ENCODE measurements at regions of chr15 and their contacts with region 1.

Region 1: DNA sequence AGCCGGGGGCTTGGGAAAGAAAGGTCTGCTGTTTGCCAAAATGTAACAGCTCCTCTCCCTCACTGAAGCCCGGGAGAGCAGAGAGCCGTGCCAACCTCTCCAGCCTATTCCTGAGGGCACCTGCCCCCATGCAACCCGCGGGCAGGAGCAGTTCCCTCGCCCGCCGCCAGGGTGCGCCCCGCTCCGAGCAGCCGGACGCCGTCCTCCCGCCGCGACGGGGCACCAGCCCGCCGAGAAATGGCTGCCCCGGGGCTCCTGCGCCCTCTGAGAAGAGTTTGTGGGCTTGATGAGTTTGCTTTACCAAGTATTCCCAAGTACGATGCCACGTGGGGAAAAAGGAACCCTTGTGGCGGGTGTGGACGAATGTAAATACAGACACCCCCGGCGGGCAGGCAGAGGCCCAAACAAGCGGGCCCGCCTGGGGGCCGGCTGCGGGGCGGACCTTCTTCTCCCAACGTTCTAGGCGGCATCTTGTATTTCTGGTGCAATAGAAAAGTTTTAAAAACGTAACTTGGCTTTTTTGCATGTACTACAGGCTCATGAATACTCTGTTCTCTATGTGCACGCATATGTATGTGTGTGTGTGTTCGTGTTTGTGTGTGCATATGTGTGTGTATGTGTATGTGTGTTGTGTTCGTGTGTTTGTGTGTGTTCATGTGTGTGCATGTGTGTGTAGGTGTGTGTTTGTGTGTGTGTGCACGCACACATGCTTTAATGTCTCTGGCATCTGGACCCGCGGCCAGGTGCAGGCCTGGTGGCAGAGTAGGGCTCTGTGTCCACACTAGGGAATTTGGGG is 162.9 kb downstream of the CHSY1 start:
- DNase-seq: peak; percentile 94

Region 2: GRCh38 chr15:101014921-101015841 is 73.8 kb before region 1 on chr15:
- intact Hi-C with region 1: loop called in 1 of 2 experiments (anchors 10 kb)
- DNase-seq: peak; percentile 91

Region 3: DNA sequence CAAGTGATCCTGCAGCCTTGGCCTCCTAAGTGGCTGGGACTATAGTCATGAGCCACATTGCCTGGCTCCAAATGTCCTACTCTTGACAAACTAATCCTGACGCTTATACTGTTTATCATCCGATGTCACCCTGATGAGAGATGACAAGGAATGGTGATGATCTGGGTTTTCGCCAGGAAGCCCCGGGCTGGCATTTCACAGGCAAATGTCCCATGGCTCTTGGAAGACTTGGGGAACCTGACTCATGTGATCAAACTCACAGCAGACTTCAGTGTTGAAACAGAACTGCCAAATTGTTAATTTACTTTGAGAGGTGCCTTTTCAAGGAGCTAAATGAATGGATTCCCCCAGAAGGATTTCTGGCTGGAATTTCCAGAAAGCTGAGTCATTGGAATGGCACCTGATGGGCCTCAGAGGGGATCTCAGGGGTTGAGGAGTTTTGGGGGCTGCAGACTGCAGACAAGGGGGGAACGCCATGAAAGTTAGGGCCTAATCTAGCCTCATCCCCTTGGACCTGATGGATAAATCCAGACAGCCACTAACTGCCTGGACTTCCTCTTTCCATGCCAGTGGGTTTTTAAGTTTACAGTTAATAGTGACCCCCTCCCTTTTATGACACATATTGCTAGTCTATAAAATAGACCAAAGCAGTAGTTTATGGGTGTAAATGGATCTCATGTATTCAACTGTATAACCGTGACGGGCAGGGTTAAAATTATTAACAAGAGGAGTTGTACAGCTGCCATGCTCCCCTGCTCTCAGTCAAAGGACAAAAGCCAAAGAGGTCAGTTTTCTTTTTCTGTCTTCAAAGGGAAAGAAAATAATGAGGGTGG is 16.3 kb after region 1 on chr15:
- intact Hi-C with region 1: no loop called
- DNase-seq: no peak

Region 4: DNA sequence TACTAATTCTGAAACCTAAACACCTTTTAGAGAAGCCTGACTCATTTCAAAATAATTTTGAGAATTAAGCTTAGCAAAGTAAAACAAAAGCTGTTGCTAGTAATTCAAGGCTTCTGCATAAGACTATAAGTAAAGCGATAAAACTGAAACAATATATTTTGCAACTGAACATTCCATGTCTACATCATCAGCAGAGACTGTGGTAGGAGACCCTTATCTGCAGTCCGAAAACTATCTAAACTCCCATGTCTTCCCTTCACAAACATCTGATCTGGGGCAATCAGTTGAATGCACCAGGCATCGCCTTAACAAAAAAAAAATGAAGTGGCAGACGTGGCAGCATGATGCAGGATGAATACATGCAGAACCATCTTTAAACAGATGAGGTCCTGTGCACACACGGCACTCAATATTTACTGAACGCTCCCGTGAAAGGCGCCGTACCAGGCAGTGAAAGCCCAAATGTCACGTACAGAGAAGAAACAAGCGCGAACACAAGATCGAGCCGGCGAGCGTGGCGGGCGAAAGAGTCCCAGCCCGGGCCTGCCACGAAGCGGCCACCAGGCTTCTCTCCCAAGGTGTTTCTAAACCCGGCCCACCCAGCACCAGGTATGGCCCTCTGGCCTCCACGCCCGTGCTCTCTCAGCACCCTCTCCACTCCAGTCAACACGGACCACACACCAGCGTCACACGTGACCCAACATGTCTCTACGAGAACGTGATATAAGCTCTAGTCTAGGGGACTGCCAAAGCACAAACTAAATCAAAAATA is 99.8 kb after region 1 on chr15:
- intact Hi-C with region 1: no loop called
- DNase-seq: peak; percentile 79

Region 5: GRCh38 chr15:101251830-101252820 is 163.1 kb after region 1 on chr15 and contains the start of gene CHSY1:
- intact Hi-C with region 1: loop called in 1 of 2 experiments (anchors 2 kb)
- DNase-seq: peak; percentile 98
- total RNA-seq, gene CHSY1: 48.6 to 57.3 TPM

Region 6: GRCh38 chr15:101258238-101259144 is 169.5 kb after region 1 on chr15:
- intact Hi-C with region 1: loop called (anchors 1 to 2 kb)
- DNase-seq: no peak